Pancreas (tissue), 10 donors: ENCODE measurements at regions of chr9 and their contacts with region 1.

Region 1: GRCh38 chr9:22863106-22863505 is 416.5 kb downstream of the DMRTA1 start:
- DNase-seq: peak in 1 of 6 donors; percentile 46
- ATAC-seq: no peak
- H3K4me3 ChIP-seq: no peak overlapping the region
- H3K27ac ChIP-seq: no peak overlapping the region
- H3K4me1 ChIP-seq: no peaks in the 10 kb centered on the region
- H3K27me3 ChIP-seq: no peaks in the 10 kb centered on the region
- CTCF ChIP-seq: no peak

Region 2: DNA sequence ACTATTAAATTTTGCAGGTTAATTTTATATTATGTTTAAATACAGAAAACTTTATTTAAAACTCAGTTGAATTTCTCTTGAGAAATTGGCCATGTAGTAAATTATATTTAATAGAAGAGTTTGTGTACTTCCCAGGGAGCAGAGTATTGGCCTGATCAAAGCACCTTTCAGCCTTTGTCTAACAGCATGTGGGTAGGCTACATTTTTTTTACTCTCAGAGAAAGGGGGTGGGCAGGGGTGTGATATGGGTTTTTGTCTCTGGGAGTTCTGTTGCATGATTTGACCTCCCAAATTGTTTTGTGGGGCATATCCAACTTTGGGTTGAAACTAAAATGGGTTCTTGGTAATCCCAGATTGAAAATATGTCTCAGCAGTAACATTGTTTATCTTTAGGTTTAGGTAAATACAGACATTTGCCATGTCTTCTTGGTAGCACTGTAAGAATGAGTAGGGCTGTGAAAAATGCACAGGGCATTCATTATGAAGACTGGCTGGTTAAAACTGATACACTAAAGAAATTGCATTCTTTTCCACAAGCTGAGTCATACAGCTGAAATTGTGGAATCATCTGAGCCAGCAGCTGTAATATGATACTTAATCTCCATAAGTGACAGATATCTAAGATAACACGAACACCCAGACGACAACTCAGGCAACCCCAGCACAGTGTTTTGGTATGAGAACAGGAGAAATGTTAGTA is 778.6 kb before region 1 on chr9:
- intact Hi-C with region 1: no loop called
- DNase-seq: no peak
- ATAC-seq: peak; percentile 64 to 85 (median 82)
- H3K4me3 ChIP-seq: no peak overlapping the region
- H3K27ac ChIP-seq: peak overlapping the region in 1 of 4 donors; percentile 36
- H3K4me1 ChIP-seq: no peaks in the 10 kb centered on the region
- H3K27me3 ChIP-seq: no peaks in the 10 kb centered on the region
- CTCF ChIP-seq: no peak

Region 3: DNA sequence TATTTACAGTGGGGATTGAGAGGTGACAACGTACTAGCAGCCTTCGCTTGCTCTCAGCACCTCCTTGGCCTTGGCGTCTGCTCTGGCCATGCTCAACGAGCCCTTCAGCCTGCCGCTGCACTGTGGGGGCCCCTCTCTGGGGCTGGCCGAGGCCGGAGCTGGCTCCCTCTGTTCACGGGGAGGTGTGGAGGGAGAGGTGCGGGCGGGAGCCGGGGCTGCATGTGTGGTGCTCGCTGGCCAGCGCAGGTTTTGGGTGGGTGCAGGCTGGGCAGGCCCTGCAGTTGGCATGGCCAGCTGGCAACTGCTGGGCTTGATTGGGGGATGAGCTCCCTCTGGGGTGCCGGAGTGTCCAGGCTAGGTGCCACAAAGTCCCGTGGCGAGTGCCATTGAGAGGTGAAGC is 422.3 kb before region 1 on chr9:
- intact Hi-C with region 1: no loop called
- DNase-seq: peak in 2 of 6 donors; percentile 27 to 66
- ATAC-seq: no peak
- H3K4me3 ChIP-seq: no peak overlapping the region
- H3K27ac ChIP-seq: no peak overlapping the region
- H3K4me1 ChIP-seq: no peaks in the 10 kb centered on the region
- H3K27me3 ChIP-seq: peaks cover 0 to 11% (median 5%) of the 10 kb centered on the region in 4 donors
- CTCF ChIP-seq: no peak

Region 4: DNA sequence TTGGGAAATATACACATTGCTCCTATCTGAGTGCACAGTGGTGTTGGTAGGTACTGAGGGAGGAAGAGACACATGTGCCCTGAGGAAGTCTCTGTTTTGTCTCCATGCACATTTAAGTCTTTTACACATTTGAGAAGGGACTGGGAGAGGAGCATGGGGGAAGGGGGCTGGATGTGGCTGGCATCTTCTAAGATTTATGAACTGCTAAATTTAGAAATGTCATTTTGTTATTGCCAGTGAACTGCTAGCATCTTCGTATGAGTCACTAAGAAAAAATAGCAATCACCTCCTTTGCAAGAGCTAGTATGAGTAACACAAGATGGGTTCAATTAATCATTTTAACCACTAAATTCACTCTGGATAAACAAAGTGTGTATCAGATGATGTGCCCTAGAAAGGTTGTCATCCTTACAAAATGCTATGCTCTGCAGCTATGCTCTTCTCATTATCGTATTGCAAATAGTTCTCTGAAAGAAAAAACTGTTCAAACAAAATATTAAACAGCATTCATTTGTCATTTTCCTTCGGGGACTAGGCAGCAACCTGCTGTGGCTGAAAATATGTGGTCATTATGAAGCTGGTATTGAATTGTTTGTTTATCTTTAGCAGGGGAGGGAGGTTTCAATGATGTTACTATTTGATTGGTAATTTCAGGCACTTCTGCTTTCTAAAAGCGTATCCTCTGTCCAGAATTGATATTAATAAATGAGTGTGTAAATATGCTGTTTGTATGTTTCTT is 180.0 kb before region 1 on chr9:
- intact Hi-C with region 1: no loop called
- DNase-seq: no peak
- ATAC-seq: peak in 2 of 4 donors; percentile 40 to 62
- H3K4me3 ChIP-seq: no peak overlapping the region
- H3K27ac ChIP-seq: no peak overlapping the region
- H3K4me1 ChIP-seq: no peaks in the 10 kb centered on the region
- H3K27me3 ChIP-seq: no peaks in the 10 kb centered on the region
- CTCF ChIP-seq: no peak

Region 5: GRCh38 chr9:22773501-22774220 is 89.4 kb before region 1 on chr9:
- intact Hi-C with region 1: no loop called
- DNase-seq: no peak
- ATAC-seq: no peak
- H3K4me3 ChIP-seq: no peak overlapping the region
- H3K27ac ChIP-seq: no peak overlapping the region
- H3K4me1 ChIP-seq: no peaks in the 10 kb centered on the region
- H3K27me3 ChIP-seq: no peaks in the 10 kb centered on the region
- CTCF ChIP-seq: no peak

Region 6: GRCh38 chr9:22893196-22893843 is 30.2 kb after region 1 on chr9:
- intact Hi-C with region 1: loop called in 1 of 3 experiments (anchors 2 kb)
- DNase-seq: no peak
- ATAC-seq: no peak
- H3K4me3 ChIP-seq: no peak overlapping the region
- H3K27ac ChIP-seq: no peak overlapping the region
- H3K4me1 ChIP-seq: no peaks in the 10 kb centered on the region
- H3K27me3 ChIP-seq: no peaks in the 10 kb centered on the region
- CTCF ChIP-seq: no peak